ENCODE measurements at regions of chr17 and their contacts with region 1.

Region 1: DNA sequence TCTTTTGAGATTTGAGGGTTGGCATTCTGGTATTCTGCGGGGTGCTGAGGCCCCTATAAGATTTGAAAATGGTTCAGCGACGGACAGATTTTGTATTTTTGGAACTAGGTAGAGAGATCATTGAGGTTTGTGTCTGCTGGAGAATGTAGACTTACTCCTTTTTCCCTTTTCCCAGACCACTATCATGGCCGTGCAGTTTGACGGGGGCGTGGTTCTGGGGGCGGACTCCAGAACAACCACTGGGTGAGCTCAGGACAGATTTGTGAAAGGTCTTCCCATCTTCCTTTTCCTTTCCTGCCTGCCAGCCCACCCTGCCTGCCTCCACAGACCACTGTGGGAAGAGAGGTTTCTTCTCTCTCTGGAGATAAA is 573 bp downstream of the PSMB6 start:
- DNase-seq: peak in 1 of 3 donors; percentile 13
- H3K4me3 ChIP-seq: peak overlapping the region; percentile 84 to 100 (median 96)
- H3K27ac ChIP-seq: peak overlapping the region; percentile 84 to 87
- H3K4me1 ChIP-seq: peaks cover 2 to 12% (median 6%) of the 10 kb centered on the region in 4 experiments
- H3K27me3 ChIP-seq: peaks cover 0 to 5% (median 0%) of the 10 kb centered on the region in 5 experiments

Region 2: DNA sequence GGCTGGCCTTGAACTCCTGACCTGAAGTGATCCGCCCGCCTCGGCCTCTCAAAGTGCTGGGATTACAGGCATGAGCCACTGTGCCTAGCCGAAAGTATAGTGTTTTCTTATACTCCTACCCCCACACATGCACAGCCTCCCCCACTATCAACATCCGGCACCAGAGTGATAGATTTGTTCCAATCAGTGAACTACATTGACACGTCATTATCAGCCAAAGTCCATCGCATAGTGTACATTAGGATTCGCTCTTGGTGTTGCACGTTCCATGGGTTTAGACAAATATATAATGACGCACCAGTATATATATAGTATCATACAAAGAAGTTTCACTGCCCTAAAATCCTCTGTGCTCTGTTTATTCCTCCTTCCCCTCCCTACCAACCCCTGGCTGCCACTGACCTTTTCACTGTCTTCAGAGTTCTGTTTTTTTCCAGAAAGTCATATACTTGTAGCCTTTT is 36.7 kb before region 1 on chr17:
- CTCF ChIA-PET with region 1: no interaction called
- POLR2A ChIA-PET with region 1: no interaction called
- DNase-seq: no peak
- H3K4me3 ChIP-seq: no peak overlapping the region
- H3K27ac ChIP-seq: no peak overlapping the region
- H3K4me1 ChIP-seq: peaks cover 0 to 7% (median 4%) of the 10 kb centered on the region in 4 experiments
- H3K27me3 ChIP-seq: peaks cover 0 to 9% (median 0%) of the 10 kb centered on the region in 5 experiments

Region 3: DNA sequence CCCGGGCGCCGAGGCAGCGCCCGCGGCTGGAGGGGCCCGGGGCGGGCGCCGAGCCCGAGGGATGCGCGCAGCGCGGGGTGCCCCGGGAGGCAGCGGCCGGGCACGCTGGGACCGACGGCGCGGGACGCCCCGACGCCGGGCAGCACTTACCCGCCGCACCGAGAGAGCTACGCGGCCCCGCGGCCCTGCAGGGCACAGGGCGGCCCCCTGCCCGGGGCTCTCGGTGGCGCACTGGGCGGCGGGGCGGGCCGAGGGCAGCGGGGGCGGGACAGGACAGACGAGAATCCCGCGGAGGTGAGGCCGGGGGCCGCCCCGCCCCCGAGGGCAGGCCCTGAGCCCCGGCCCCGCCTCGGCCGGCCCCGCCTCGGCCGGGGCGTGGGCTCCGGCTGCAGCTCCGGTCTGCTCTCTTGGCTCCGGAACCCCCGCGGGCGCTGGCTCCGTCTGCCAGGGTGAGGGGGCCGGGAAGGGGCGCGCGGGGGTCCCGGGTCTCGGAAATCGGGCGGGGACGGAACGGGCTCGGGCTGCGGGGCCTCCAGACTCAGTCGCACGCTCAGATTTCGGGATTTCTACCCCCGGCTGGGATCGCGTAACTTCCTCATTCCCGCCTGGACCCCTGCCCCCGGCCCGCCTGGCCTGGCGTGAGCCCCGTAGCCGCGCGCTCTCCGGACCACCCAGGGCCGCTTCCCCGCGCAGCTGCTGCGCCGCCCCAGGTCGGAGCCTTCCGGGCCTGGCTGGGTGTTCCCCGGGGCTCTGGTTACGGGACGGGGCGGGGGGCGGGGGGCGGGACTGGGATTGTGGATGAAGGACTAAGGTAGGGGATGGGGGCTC is 10.5 kb after region 1 on chr17 and contains the start of gene PLD2:
- CTCF ChIA-PET with region 1: interaction called, 14 read pairs
- POLR2A ChIA-PET with region 1: interaction called, 3 read pairs
- DNase-seq: peak; percentile 75 to 83 (median 78)
- H3K4me3 ChIP-seq: peak within 1 kb of the TSS; percentile 46 to 78 (median 65)
- H3K27ac ChIP-seq: no peak within 1 kb of the TSS
- H3K4me1 ChIP-seq: peaks cover 0 to 13% (median 9%) of the 10 kb centered on the region in 4 experiments
- H3K27me3 ChIP-seq: peaks cover 2 to 13% (median 6%) of the 10 kb centered on the region in 5 experiments

Region 4: DNA sequence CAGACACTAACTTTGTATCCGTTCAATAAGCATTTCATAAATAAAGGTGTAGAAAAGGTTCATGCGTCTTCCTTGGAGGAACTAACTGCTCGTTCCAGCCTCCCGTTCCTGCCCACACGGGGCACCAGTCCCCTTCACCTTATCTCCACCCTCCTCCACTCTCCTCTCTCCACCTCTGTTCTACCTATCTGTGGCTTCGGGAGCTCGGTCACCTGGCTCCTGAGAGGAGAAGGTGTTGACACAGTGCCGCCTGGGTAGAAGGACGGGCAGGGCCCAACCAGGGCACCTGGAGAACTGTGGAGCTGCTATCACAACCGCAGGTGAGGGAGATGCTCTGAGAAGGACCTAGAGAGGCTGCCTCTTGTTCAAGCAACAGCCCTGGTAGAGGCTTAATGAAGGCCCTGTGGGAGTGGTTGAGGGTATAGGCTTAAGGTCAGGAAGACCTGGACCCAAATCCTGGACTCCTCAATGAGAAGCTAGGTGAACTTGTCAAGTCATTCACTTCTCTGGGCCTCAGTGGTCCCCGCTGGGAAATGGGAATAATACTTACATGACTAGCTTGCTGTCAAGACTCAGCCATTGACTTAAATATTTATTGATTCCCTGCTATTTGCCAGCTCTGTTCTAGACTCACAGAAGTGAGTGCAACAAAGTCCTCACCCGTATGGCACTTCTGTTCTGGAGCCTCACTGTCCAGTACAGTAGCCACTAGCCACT is 27.0 kb after region 1 on chr17:
- CTCF ChIA-PET with region 1: no interaction called
- POLR2A ChIA-PET with region 1: no interaction called
- DNase-seq: no peak
- H3K4me3 ChIP-seq: no peak overlapping the region
- H3K27ac ChIP-seq: no peak overlapping the region
- H3K4me1 ChIP-seq: no peaks in the 10 kb centered on the region
- H3K27me3 ChIP-seq: peaks cover 0 to 2% (median 0%) of the 10 kb centered on the region in 5 experiments